CD14-positive monocyte (primary cell): ENCODE measurements at regions of chr1 and their contacts with region 1.

Region 1: GRCh38 chr1:193059268-193060225 is at the starts of genes RO60 and UCHL5:
- DNase-seq: peak; percentile 92 to 94 (median 94)
- H3K4me3 ChIP-seq: peak within 1 kb of the TSS; percentile 71 to 85 (median 83)
- H3K4me3 Mint-ChIP-seq: peak within 1 kb of the TSS; percentile 95 to 97
- H3K27ac ChIP-seq: peak within 1 kb of the TSS; percentile 93 to 94
- H3K27ac Mint-ChIP-seq: peak within 1 kb of the TSS; percentile 98 to 99 (median 99)
- H3K4me1 ChIP-seq: peaks cover 19 to 33% of the 10 kb centered on the region in 2 donors
- H3K4me1 Mint-ChIP-seq: peaks cover 48% of the 10 kb centered on the region
- H3K27me3 ChIP-seq: no peaks in the 10 kb centered on the region
- H3K27me3 Mint-ChIP-seq: peaks cover 0 to 4% (median 0%) of the 10 kb centered on the region in 3 donors
- CTCF ChIP-seq: no peak
- polyA plus RNA-seq, gene RO60: 13.2 to 67.9 (median 58.1) TPM
- polyA plus RNA-seq, gene UCHL5: 8.6 to 43.0 (median 29.6) TPM

Region 2: DNA sequence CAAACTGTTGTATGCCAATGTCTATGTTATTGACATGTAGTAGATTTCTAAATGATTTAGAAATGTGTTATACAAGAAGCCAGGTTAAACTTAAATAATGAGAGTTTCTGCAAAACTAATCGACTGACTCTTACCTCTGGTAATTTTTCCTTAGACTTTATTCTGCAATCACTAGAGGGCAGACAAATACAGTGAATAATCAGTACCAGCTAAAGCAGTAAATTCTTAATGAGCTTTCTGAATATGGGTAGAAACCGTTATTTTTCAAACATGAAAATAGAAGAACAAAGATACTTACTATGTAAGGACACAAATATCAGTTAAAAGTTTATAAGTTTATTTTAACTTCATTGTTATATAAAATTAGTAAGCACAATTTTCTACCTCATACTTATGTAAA is 581.9 kb before region 1 on chr1:
- intact Hi-C with region 1: loop called in 1 of 2 experiments (anchors 10 kb)
- DNase-seq: peak in 2 of 3 donors; percentile 20 to 43
- H3K4me3 ChIP-seq: no peak overlapping the region
- H3K4me3 Mint-ChIP-seq: no peak overlapping the region
- H3K27ac ChIP-seq: no peak overlapping the region
- H3K27ac Mint-ChIP-seq: no peak overlapping the region
- H3K4me1 ChIP-seq: no peaks in the 10 kb centered on the region
- H3K4me1 Mint-ChIP-seq: peaks cover 5% of the 10 kb centered on the region
- H3K27me3 ChIP-seq: no peaks in the 10 kb centered on the region
- H3K27me3 Mint-ChIP-seq: peaks cover 0 to 5% (median 3%) of the 10 kb centered on the region in 3 donors
- CTCF ChIP-seq: peak; percentile 63

Region 3: GRCh38 chr1:193009501-193009900 is 50.0 kb before region 1 on chr1:
- intact Hi-C with region 1: no loop called
- DNase-seq: no peak
- H3K4me3 ChIP-seq: no peak overlapping the region
- H3K4me3 Mint-ChIP-seq: no peak overlapping the region
- H3K27ac ChIP-seq: no peak overlapping the region
- H3K27ac Mint-ChIP-seq: peak overlapping the region in 3 of 7 donors; percentile 17 to 58 (median 52)
- H3K4me1 ChIP-seq: peaks cover 12 to 22% of the 10 kb centered on the region in 2 donors
- H3K4me1 Mint-ChIP-seq: peaks cover 22% of the 10 kb centered on the region
- H3K27me3 ChIP-seq: no peaks in the 10 kb centered on the region
- H3K27me3 Mint-ChIP-seq: no peaks in the 10 kb centered on the region
- CTCF ChIP-seq: no peak

Region 4: GRCh38 chr1:193019442-193020026 is 40.0 kb before region 1 on chr1:
- intact Hi-C with region 1: loop called in 1 of 2 experiments (anchors 5 kb)
- DNase-seq: peak; percentile 50 to 85 (median 63)
- H3K4me3 ChIP-seq: no peak overlapping the region
- H3K4me3 Mint-ChIP-seq: no peak overlapping the region
- H3K27ac ChIP-seq: peak overlapping the region in 1 of 2 donors; percentile 48
- H3K27ac Mint-ChIP-seq: peak overlapping the region in 4 of 7 donors; percentile 37 to 64 (median 44)
- H3K4me1 ChIP-seq: peaks cover 3 to 6% of the 10 kb centered on the region in 2 donors
- H3K4me1 Mint-ChIP-seq: peaks cover 4% of the 10 kb centered on the region
- H3K27me3 ChIP-seq: no peaks in the 10 kb centered on the region
- H3K27me3 Mint-ChIP-seq: no peaks in the 10 kb centered on the region
- CTCF ChIP-seq: peak; percentile 71

Region 5: GRCh38 chr1:193104906-193105820 is 45.6 kb after region 1 on chr1 and contains the start of gene GLRX2:
- intact Hi-C with region 1: loop called (anchors 5 to 10 kb)
- DNase-seq: peak; percentile 70 to 79 (median 74)
- H3K4me3 ChIP-seq: peak within 1 kb of the TSS; percentile 63 to 97 (median 96)
- H3K4me3 Mint-ChIP-seq: peak within 1 kb of the TSS; percentile 88 to 95
- H3K27ac ChIP-seq: peak within 1 kb of the TSS; percentile 66 to 90
- H3K27ac Mint-ChIP-seq: peak within 1 kb of the TSS; percentile 90 to 95 (median 93)
- H3K4me1 ChIP-seq: peaks cover 14 to 21% of the 10 kb centered on the region in 2 donors
- H3K4me1 Mint-ChIP-seq: peaks cover 23% of the 10 kb centered on the region
- H3K27me3 ChIP-seq: no peaks in the 10 kb centered on the region
- H3K27me3 Mint-ChIP-seq: peaks cover 0 to 3% (median 1%) of the 10 kb centered on the region in 3 donors
- CTCF ChIP-seq: peak; percentile 25
- polyA plus RNA-seq, gene GLRX2: 4.2 to 16.1 (median 15.2) TPM

Region 6: GRCh38 chr1:193121616-193122593 is 62.4 kb after region 1 on chr1 and contains the start of gene CDC73:
- intact Hi-C with region 1: loop called in 1 of 2 experiments (anchors 5 kb)
- DNase-seq: peak; percentile 93 to 97 (median 96)
- H3K4me3 ChIP-seq: peak within 1 kb of the TSS; percentile 67 to 92 (median 77)
- H3K4me3 Mint-ChIP-seq: peak within 1 kb of the TSS; percentile 93 to 95
- H3K27ac ChIP-seq: peak within 1 kb of the TSS; percentile 93 to 94
- H3K27ac Mint-ChIP-seq: peak within 1 kb of the TSS; percentile 96 to 99 (median 98)
- H3K4me1 ChIP-seq: peaks cover 16 to 29% of the 10 kb centered on the region in 2 donors
- H3K4me1 Mint-ChIP-seq: peaks cover 36% of the 10 kb centered on the region
- H3K27me3 ChIP-seq: no peaks in the 10 kb centered on the region
- H3K27me3 Mint-ChIP-seq: peaks cover 0 to 7% (median 2%) of the 10 kb centered on the region in 3 donors
- CTCF ChIP-seq: peak; percentile 93
- polyA plus RNA-seq, gene CDC73: 14.2 to 60.3 (median 57.2) TPM

Region 7: GRCh38 chr1:193602705-193603104 is 543.2 kb after region 1 on chr1:
- intact Hi-C with region 1: no loop called
- DNase-seq: no peak
- H3K4me3 ChIP-seq: no peak overlapping the region
- H3K4me3 Mint-ChIP-seq: no peak overlapping the region
- H3K27ac ChIP-seq: no peak overlapping the region
- H3K27ac Mint-ChIP-seq: no peak overlapping the region
- H3K4me1 ChIP-seq: no peaks in the 10 kb centered on the region
- H3K4me1 Mint-ChIP-seq: no peaks in the 10 kb centered on the region
- H3K27me3 ChIP-seq: no peaks in the 10 kb centered on the region
- H3K27me3 Mint-ChIP-seq: peaks cover 0 to 3% (median 0%) of the 10 kb centered on the region in 3 donors
- CTCF ChIP-seq: no peak